ENCODE measurements at regions of chr18 and their contacts with region 1.

Region 1: DNA sequence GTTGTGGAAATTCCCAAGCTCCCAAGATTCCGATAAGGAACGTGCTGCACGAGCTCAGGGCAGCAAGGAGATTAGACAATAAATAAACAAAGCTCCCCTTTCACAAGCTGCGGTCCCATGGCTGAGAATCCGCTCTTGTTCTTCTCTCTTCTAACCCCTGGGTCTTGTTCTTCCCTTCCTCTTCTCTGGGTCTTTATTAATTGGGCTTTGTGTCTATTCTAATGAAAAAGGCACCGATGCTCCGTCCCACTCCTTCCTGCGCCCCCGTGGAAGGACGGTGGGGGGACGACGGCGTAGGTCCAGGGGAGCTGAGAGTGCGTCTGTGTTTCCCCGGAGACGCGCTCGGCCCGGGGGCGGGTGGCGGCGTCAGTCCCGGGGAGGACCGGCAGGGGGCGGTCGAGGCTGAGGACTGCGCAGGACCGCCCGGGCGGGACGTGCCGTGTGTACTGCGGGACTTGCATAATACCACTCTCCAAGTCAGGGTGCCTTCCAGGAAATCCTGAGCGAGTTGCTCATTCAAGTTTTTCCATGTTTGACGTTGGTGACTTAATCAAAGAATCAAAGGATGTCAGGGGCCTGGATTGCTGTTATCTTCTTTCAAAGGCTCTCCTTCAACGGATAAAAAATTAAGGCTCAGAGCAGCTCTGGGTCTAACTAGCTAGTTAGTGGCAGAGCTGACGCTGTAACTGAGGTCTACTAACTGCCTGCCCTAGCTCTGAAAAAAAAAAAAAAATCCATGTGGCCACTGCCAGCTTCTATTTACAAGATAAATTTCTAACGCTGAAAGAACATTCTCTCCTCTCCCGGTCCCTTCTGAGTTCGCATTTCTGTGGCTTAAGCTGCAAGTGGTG is 321.4 kb downstream of the TGIF1 start:
- DNase-seq: peak; percentile 84 to 91
- H3K4me3 ChIP-seq: peak overlapping the region; percentile 29 to 48
- H3K27ac ChIP-seq: peak overlapping the region; percentile 64 to 71
- H3K4me1 ChIP-seq: peaks cover 0 to 13% (median 9%) of the 10 kb centered on the region in 4 donors
- H3K27me3 ChIP-seq: no peaks in the 10 kb centered on the region
- CTCF ChIP-seq: peak; percentile 98

Region 2: DNA sequence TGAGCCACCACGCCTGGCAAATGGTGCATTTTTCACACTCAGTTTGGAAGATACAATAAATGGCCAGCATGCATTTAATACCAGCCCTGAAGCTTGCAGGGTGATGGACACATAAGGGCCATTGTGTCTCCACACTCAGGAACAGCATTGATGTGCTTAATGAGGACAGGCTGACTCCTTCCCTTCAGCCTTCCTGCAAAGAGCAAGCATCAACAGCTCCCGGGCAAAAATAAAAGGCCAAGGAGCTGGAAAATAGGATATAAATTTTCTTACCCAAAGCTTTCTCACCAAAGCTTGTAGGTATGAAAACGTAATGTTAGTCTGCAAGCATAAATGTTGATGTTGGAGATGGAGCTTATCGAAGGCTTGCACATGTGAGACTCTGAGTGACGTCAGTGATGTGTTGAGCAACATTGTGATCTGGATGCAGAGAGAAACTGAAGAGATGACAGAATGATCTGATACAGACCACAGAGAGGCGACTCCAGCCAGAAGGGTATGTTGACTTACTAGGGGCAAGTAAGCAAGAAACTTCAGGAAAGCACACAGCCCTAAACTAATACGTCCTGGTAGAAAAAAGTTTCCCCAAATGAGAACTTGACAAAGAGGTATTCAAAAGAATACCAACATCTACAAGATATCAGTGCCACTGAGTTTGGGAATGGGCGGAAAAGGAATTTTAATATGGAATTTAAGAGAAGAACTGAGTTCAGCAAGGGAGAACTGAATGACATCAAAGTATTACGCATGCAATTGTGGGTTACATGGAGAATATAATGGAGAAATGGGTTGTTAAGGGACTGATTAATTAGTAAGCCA is 64.9 kb before region 1 on chr18:
- intact Hi-C with region 1: loop called (anchors 2 kb)
- DNase-seq: no peak
- H3K4me3 ChIP-seq: no peak overlapping the region
- H3K27ac ChIP-seq: no peak overlapping the region
- H3K4me1 ChIP-seq: peaks cover 0 to 20% (median 2%) of the 10 kb centered on the region in 4 donors
- H3K27me3 ChIP-seq: no peaks in the 10 kb centered on the region
- CTCF ChIP-seq: no peak

Region 3: DNA sequence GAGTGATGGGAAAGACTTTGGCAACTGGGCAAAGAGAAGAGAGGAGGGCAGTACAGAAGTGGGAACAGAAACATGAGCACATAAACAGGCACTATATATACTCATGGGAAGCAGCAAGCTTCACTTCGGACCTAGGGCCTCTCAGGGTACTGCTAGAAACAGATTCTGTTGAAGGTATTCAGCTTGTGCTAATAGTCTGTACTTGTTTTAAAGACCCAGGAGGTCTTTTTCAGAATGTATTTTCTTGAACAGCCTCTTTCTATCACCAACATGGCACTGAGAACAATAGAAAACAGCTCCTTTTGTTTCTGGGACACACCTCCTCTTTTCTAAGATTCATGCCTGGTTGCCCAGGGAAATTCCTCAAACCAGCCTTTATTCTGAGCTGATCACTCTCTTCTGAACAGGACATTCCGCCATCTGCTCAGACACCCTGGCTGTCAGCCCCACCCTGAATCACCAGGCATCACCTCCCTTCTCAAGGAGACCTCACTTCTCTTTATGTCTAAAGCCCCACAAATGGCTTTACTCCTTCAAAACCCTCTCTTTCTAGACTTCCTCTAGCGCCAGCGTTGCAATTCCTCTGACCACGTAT is 68.2 kb after region 1 on chr18:
- intact Hi-C with region 1: no loop called
- DNase-seq: no peak
- H3K4me3 ChIP-seq: no peak overlapping the region
- H3K27ac ChIP-seq: no peak overlapping the region
- H3K4me1 ChIP-seq: no peaks in the 10 kb centered on the region
- H3K27me3 ChIP-seq: no peaks in the 10 kb centered on the region
- CTCF ChIP-seq: no peak

Region 4: GRCh38 chr18:3998698-3999333 is 227.5 kb after region 1 on chr18:
- intact Hi-C with region 1: loop called (anchors 2 kb)
- DNase-seq: no peak
- H3K4me3 ChIP-seq: no peak overlapping the region
- H3K27ac ChIP-seq: no peak overlapping the region
- H3K4me1 ChIP-seq: peaks cover 0 to 3% (median 1%) of the 10 kb centered on the region in 4 donors
- H3K27me3 ChIP-seq: no peaks in the 10 kb centered on the region
- CTCF ChIP-seq: peak; percentile 71 to 72